ENCODE measurements at regions of chr2 and their contacts with region 1.

Region 1: GRCh38 chr2:185279999-185280398 is 458.6 kb upstream of the FSIP2 start:
- DNase-seq: peak; percentile 7
- H3K4me3 ChIP-seq: no peak overlapping the region
- H3K27ac ChIP-seq: no peak overlapping the region
- H3K4me1 ChIP-seq: no peaks in the 10 kb centered on the region
- H3K27me3 ChIP-seq: no peaks in the 10 kb centered on the region
- CTCF ChIP-seq: peak; percentile 51 to 56

Region 2: DNA sequence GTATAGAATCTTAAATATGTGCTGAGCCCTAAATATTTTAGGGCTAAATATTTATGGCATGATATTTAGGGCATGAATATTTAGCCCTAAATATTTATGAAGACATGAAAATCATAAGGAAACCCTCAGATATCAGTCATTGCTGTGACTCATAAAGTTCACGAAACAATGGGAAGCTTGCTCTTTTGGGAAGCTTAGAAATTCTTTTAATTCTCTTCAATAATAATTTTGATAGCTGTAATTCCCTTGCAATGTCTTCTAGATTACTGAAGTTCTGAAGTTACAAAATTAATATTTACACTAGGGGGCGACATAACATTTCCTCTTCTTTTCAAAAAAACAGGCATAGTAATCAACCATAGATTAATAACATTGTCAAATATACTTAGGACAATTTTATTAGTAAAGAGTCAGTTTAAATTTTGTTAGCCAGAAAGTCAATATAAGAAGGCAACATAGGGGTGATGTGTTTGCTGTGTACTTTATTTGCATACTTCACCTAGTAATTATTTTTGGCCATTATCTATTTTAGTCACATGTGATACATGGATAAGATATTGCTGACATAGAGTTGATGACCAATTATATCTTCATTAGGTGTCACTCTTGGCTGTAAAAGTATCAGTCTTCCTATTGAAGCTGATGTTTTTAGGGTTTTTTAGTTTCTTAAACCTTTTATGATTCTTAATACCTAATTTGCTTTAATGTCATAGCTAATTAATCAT is 668.5 kb before region 1 on chr2:
- CTCF ChIA-PET with region 1: no interaction called
- dilution Hi-C with region 1: no loop called
- in situ Hi-C with region 1: no loop called
- intact Hi-C with region 1: loop called (anchors 2 kb)
- DNase-seq: peak; percentile 20
- H3K4me3 ChIP-seq: no peak overlapping the region
- H3K27ac ChIP-seq: no peak overlapping the region
- H3K4me1 ChIP-seq: no peaks in the 10 kb centered on the region
- H3K27me3 ChIP-seq: no peaks in the 10 kb centered on the region
- CTCF ChIP-seq: peak; percentile 40 to 56

Region 3: DNA sequence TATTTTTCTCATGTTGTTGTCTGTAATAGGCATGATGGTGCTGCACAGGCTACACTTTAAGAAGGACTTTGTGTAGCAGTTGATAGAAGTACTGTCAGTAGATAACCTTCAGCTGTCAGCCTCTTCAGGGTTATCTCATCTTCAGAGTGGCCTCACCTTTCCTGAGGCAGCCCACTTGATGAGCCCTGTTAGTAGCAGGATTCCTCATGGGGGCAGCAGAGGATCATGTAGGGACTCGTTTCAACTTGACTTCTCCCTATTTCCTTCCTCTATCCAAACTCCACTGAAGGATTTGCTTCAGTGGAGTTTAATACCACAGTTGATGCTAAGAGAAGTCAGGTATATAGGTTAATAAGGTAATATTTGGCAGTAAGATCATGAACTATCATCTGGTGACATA is 71.7 kb before region 1 on chr2:
- CTCF ChIA-PET with region 1: no interaction called
- dilution Hi-C with region 1: no loop called
- in situ Hi-C with region 1: no loop called
- intact Hi-C with region 1: loop called (anchors 1 kb)
- DNase-seq: peak; percentile 38
- H3K4me3 ChIP-seq: no peak overlapping the region
- H3K27ac ChIP-seq: no peak overlapping the region
- H3K4me1 ChIP-seq: no peaks in the 10 kb centered on the region
- H3K27me3 ChIP-seq: peaks cover 2% of the 10 kb centered on the region
- CTCF ChIP-seq: peak; percentile 65 to 69

Region 4: GRCh38 chr2:185316383-185316782 is 36.4 kb after region 1 on chr2:
- CTCF ChIA-PET with region 1: no interaction called
- dilution Hi-C with region 1: no loop called
- in situ Hi-C with region 1: no loop called
- intact Hi-C with region 1: no loop called
- DNase-seq: no peak
- H3K4me3 ChIP-seq: no peak overlapping the region
- H3K27ac ChIP-seq: no peak overlapping the region
- H3K4me1 ChIP-seq: no peaks in the 10 kb centered on the region
- H3K27me3 ChIP-seq: peaks cover 6% of the 10 kb centered on the region
- CTCF ChIP-seq: no peak

Region 5: GRCh38 chr2:185347445-185347844 is 67.4 kb after region 1 on chr2:
- CTCF ChIA-PET with region 1: no interaction called
- dilution Hi-C with region 1: no loop called
- in situ Hi-C with region 1: no loop called
- intact Hi-C with region 1: no loop called
- DNase-seq: no peak
- H3K4me3 ChIP-seq: no peak overlapping the region
- H3K27ac ChIP-seq: no peak overlapping the region
- H3K4me1 ChIP-seq: no peaks in the 10 kb centered on the region
- H3K27me3 ChIP-seq: no peaks in the 10 kb centered on the region
- CTCF ChIP-seq: no peak